Panc1 (cell line): ENCODE measurements at regions of chr9 and their contacts with region 1.

Region 1: DNA sequence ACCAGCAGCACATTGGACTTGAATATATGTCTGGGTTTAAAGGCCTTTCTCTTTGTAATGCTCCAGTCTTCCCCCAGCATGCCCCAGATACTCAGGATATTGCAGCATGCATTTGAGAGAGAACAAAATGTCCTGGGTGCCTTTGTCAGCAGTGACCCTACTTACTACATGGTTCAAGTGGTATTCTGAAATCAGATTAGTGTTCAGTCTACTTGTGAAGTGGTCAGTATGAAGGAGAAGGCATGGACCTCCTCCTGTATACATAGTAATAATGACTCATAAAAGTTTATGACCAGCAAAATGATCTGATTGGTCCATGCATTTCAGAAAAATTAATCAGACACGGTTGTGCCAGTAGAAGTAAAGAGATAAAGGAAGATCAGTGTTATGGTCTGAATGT is 25.4 kb downstream of the GPR21 start:
- DNase-seq: no peak
- ATAC-seq: no peak
- H3K4me3 ChIP-seq: no peak overlapping the region
- H3K27ac ChIP-seq: no peak overlapping the region
- H3K4me1 ChIP-seq: no peaks in the 10 kb centered on the region
- H3K27me3 ChIP-seq: no peaks in the 10 kb centered on the region
- CTCF ChIP-seq: no peak

Region 2: GRCh38 chr9:123027517-123027916 is 31.3 kb before region 1 on chr9:
- CTCF ChIA-PET with region 1: no interaction called
- POLR2A ChIA-PET with region 1: interaction called, 10 read pairs
- in situ Hi-C with region 1: no loop called
- intact Hi-C with region 1: no loop called
- DNase-seq: no peak
- ATAC-seq: no peak
- H3K4me3 ChIP-seq: no peak overlapping the region
- H3K27ac ChIP-seq: no peak overlapping the region
- H3K4me1 ChIP-seq: no peaks in the 10 kb centered on the region
- H3K27me3 ChIP-seq: no peaks in the 10 kb centered on the region
- CTCF ChIP-seq: no peak